Naive thymus-derived CD4-positive, alpha-beta T cell (primary cell): ENCODE measurements at regions of chrX and their contacts with region 1.

Region 1: GRCh38 chrX:39859991-39860861 is 237.5 kb downstream of the BCOR start:
- DNase-seq: peak in 5 of 9 donors; percentile 16 to 74 (median 19)
- ATAC-seq: peak; percentile 40
- H3K4me3 ChIP-seq: no peak overlapping the region
- H3K4me3 Mint-ChIP-seq: peak overlapping the region in 6 of 10 donors; percentile 12 to 60 (median 48)
- H3K27ac ChIP-seq: no peak overlapping the region
- H3K27ac Mint-ChIP-seq: peak overlapping the region in 8 of 9 donors; percentile 37 to 89 (median 56)
- H3K4me1 ChIP-seq: peaks cover 17 to 19% of the 10 kb centered on the region in 2 donors
- H3K4me1 Mint-ChIP-seq: peaks cover 10 to 50% (median 26%) of the 10 kb centered on the region in 7 donors
- H3K27me3 ChIP-seq: no peaks in the 10 kb centered on the region
- H3K27me3 Mint-ChIP-seq: no peaks in the 10 kb centered on the region

Region 2: GRCh38 chrX:39309018-39309635 is 551.1 kb before region 1 on chrX:
- CTCF ChIA-PET with region 1: no interaction called
- POLR2A ChIA-PET with region 1: no interaction called
- intact Hi-C with region 1: loop called in 1 of 2 experiments (anchors 1 kb)
- DNase-seq: peak in 7 of 9 donors; percentile 23 to 81 (median 43)
- ATAC-seq: peak; percentile 83
- H3K4me3 ChIP-seq: peak overlapping the region; percentile 41
- H3K4me3 Mint-ChIP-seq: peak overlapping the region; percentile 33 to 91 (median 76)
- H3K27ac ChIP-seq: peak overlapping the region; percentile 84
- H3K27ac Mint-ChIP-seq: peak overlapping the region; percentile 95 to 100 (median 99)
- H3K4me1 ChIP-seq: peaks cover 18 to 42% of the 10 kb centered on the region in 2 donors
- H3K4me1 Mint-ChIP-seq: peaks cover 28 to 81% (median 74%) of the 10 kb centered on the region in 7 donors
- H3K27me3 ChIP-seq: no peaks in the 10 kb centered on the region
- H3K27me3 Mint-ChIP-seq: no peaks in the 10 kb centered on the region

Region 3: DNA sequence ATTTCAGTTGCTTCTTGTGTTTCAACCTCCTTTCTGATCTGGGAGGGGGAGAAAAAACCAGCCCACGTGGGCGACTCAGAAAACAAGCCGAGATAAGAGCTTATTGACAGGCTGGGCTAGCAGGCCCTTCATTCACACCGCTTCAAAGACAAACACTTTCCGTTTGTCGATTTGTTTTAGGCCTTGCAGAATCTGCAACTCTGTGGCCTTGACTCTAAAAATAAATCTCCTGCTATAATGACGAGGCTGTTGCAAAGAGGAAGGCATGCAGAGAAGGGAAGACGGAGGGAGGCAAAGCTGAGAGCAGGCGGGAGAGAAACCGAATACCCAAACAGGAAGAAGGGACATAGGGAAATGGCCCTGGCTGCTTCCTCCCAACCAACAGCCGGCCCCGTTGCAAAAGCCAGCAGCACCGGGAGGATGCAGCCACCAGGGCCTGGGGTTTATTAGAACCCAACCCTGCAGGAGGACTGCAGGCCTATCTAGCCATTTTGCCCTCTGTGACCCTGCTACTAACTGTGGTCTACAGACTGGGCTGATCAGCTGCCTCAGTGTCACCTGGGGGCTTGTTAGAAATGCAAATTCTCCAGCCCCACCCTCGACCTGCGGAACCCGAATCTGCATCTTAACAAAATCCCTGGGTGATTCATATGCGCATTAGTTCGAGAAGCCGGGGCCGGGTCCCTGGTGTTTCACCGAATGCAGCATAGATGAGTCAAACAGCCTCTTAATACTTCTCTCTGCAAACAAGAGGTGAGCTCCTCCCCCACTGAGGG is 88.0 kb before region 1 on chrX:
- CTCF ChIA-PET with region 1: no interaction called
- POLR2A ChIA-PET with region 1: interaction called, 5 read pairs
- intact Hi-C with region 1: loop called (anchors 2 kb)
- DNase-seq: peak in 6 of 9 donors; percentile 18 to 52 (median 30)
- ATAC-seq: peak; percentile 63
- H3K4me3 ChIP-seq: peak overlapping the region; percentile 17
- H3K4me3 Mint-ChIP-seq: peak overlapping the region; percentile 43 to 80 (median 74)
- H3K27ac ChIP-seq: peak overlapping the region; percentile 43
- H3K27ac Mint-ChIP-seq: peak overlapping the region; percentile 86 to 98 (median 94)
- H3K4me1 ChIP-seq: peaks cover 26 to 32% of the 10 kb centered on the region in 2 donors
- H3K4me1 Mint-ChIP-seq: peaks cover 20 to 50% (median 43%) of the 10 kb centered on the region in 7 donors
- H3K27me3 ChIP-seq: no peaks in the 10 kb centered on the region
- H3K27me3 Mint-ChIP-seq: no peaks in the 10 kb centered on the region

Region 4: GRCh38 chrX:39874202-39874816 is 14.1 kb after region 1 on chrX:
- CTCF ChIA-PET with region 1: interaction called, 3 read pairs
- POLR2A ChIA-PET with region 1: interaction called, 3 read pairs
- intact Hi-C with region 1: loop called (anchors 1 kb)
- DNase-seq: peak in 3 of 9 donors; percentile 18 to 58 (median 21)
- ATAC-seq: peak; percentile 49
- H3K4me3 ChIP-seq: no peak overlapping the region
- H3K4me3 Mint-ChIP-seq: peak overlapping the region in 1 of 10 donors; percentile 23
- H3K27ac ChIP-seq: no peak overlapping the region
- H3K27ac Mint-ChIP-seq: peak overlapping the region in 2 of 9 donors; percentile 10 to 86
- H3K4me1 ChIP-seq: peaks cover 14 to 19% of the 10 kb centered on the region in 2 donors
- H3K4me1 Mint-ChIP-seq: peaks cover 0 to 35% (median 23%) of the 10 kb centered on the region in 7 donors
- H3K27me3 ChIP-seq: no peaks in the 10 kb centered on the region
- H3K27me3 Mint-ChIP-seq: no peaks in the 10 kb centered on the region

Region 5: DNA sequence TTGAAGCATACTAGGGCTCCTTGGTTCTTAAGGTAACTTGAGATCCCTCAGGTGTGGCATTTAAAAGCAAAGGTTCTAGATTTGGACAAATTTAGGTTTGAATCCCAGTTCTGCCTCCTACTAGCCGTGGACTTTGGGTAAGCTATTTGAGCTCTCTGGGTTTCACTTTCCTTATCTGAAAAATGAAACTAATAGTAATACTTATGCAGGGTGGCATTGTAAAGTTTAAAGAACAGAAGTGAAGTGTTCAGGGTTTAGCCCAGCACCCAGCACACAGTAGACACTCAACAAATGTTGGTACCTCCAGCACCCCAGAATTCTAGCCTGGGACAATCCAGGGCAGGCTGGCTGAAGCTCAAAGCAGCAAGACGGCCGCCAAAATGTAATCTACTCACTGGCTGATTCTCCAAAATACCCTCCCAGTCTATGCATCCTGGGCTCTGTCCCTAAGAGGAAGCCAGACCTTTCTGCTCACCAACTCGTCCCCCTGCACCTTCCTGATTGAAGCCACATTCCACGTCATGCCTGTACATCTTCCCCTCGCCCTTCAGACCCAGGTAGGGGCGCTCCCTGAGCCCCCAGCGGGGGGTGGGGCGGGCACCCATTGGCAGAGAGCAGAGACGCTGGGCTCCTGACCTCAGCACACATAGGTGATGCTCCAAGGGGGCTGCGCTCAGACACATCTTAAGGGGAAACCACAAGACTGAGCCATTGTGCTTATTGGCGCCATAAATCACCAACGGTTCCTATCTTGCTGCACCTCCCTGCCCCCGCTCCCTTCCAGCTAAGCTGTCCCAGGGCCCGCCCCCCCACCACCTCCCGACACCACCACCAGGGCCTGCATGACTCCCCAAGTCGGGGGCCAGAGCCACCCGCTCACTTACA is 76.9 kb after region 1 on chrX:
- CTCF ChIA-PET with region 1: no interaction called
- POLR2A ChIA-PET with region 1: no interaction called
- intact Hi-C with region 1: loop called in 1 of 2 experiments (anchors 10 kb)
- DNase-seq: peak in 3 of 9 donors; percentile 2 to 14 (median 8)
- ATAC-seq: peak; percentile 58
- H3K4me3 ChIP-seq: peak overlapping the region; percentile 50
- H3K4me3 Mint-ChIP-seq: peak overlapping the region; percentile 74 to 84 (median 77)
- H3K27ac ChIP-seq: peak overlapping the region; percentile 55
- H3K27ac Mint-ChIP-seq: peak overlapping the region; percentile 22 to 89 (median 81)
- H3K4me1 ChIP-seq: peaks cover 0 to 6% of the 10 kb centered on the region in 2 donors
- H3K4me1 Mint-ChIP-seq: peaks cover 0 to 16% (median 10%) of the 10 kb centered on the region in 7 donors
- H3K27me3 ChIP-seq: no peaks in the 10 kb centered on the region
- H3K27me3 Mint-ChIP-seq: no peaks in the 10 kb centered on the region

Region 6: DNA sequence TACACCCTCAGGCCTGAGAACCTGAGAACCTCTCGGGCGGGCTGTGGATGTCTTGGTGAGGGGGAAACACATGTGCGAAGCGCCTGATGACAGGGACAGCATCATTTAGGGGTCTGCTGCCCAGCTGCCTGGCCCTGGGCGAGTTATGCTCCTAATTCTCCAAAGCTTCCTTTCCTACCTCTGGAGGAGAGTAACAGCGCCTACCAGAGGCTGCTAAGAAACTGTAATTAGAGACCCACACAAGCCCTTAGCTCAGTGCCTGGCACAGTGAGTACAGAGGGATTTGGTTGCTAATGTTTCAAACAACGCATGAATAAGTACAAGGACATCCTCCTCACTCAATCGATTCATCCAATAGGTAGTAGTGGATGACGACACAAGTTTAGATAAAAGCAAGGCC is 197.2 kb after region 1 on chrX:
- CTCF ChIA-PET with region 1: no interaction called
- POLR2A ChIA-PET with region 1: no interaction called
- intact Hi-C with region 1: no loop called
- DNase-seq: no peak
- ATAC-seq: no peak
- H3K4me3 ChIP-seq: no peak overlapping the region
- H3K4me3 Mint-ChIP-seq: no peak overlapping the region
- H3K27ac ChIP-seq: no peak overlapping the region
- H3K27ac Mint-ChIP-seq: no peak overlapping the region
- H3K4me1 ChIP-seq: peaks cover 0 to 11% of the 10 kb centered on the region in 2 donors
- H3K4me1 Mint-ChIP-seq: peaks cover 0 to 17% (median 11%) of the 10 kb centered on the region in 7 donors
- H3K27me3 ChIP-seq: no peaks in the 10 kb centered on the region
- H3K27me3 Mint-ChIP-seq: no peaks in the 10 kb centered on the region

Region 7: GRCh38 chrX:40097497-40098263 is 237.5 kb after region 1 on chrX and contains the start of gene BCOR:
- CTCF ChIA-PET with region 1: no interaction called
- POLR2A ChIA-PET with region 1: no interaction called
- intact Hi-C with region 1: loop called (anchors 1 to 2 kb)
- DNase-seq: peak; percentile 54 to 78 (median 72)
- ATAC-seq: peak; percentile 58
- H3K4me3 ChIP-seq: peak within 1 kb of the TSS; percentile 74
- H3K4me3 Mint-ChIP-seq: peak within 1 kb of the TSS; percentile 88 to 98 (median 92)
- H3K27ac ChIP-seq: peak within 1 kb of the TSS; percentile 80
- H3K27ac Mint-ChIP-seq: peak within 1 kb of the TSS; percentile 82 to 93 (median 89)
- H3K4me1 ChIP-seq: peaks cover 5 to 12% of the 10 kb centered on the region in 2 donors
- H3K4me1 Mint-ChIP-seq: peaks cover 12 to 34% (median 25%) of the 10 kb centered on the region in 7 donors
- H3K27me3 ChIP-seq: no peaks in the 10 kb centered on the region
- H3K27me3 Mint-ChIP-seq: no peaks in the 10 kb centered on the region
- total RNA-seq, gene BCOR: 23.3 to 55.2 (median 43.3) TPM